Left ventricle myocardium inferior (tissue), 1 donor: ENCODE measurements at regions of chr1 and their contacts with region 1.

Region 1: GRCh38 chr1:246753670-246754535 is 29.7 kb downstream of the SCCPDH start:
- DNase-seq: peak; percentile 44
- H3K4me3 ChIP-seq: no peak overlapping the region
- H3K27ac ChIP-seq: no peak overlapping the region
- H3K4me1 ChIP-seq: peaks cover 6% of the 10 kb centered on the region
- H3K27me3 ChIP-seq: no peaks in the 10 kb centered on the region
- CTCF ChIP-seq: peak; percentile 84

Region 2: DNA sequence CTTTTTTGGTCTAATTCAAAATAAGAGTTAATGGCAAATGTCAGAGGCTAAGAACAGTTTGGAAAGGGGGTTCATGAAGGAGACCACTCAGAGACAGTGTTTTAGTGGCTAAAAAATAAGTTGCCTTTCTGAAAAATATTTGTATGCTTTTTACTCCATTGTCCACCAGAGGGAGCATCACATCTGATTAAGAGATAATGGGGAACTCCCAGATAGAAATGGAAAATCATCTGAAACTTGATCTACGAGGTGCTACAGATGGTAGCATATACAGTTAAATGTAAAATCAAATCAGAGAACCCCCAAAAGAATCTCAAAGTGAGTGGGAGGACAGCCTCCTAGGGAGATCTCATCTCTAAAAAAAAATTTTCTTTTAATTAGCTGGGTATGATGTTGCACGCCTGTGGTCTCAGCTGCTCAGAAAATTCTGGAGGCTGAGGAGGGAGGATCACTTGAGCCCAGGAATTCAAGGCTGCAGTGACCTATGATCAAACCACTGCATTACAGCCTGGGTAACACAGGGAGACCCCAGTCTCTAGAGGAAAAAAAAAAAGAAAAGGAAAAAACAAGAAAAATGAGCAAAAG is 256.5 kb before region 1 on chr1:
- intact Hi-C with region 1: loop called (anchors 10 kb)
- DNase-seq: no peak
- H3K4me3 ChIP-seq: no peak overlapping the region
- H3K27ac ChIP-seq: no peak overlapping the region
- H3K4me1 ChIP-seq: peaks cover 1% of the 10 kb centered on the region
- H3K27me3 ChIP-seq: no peaks in the 10 kb centered on the region
- CTCF ChIP-seq: peak; percentile 73

Region 3: DNA sequence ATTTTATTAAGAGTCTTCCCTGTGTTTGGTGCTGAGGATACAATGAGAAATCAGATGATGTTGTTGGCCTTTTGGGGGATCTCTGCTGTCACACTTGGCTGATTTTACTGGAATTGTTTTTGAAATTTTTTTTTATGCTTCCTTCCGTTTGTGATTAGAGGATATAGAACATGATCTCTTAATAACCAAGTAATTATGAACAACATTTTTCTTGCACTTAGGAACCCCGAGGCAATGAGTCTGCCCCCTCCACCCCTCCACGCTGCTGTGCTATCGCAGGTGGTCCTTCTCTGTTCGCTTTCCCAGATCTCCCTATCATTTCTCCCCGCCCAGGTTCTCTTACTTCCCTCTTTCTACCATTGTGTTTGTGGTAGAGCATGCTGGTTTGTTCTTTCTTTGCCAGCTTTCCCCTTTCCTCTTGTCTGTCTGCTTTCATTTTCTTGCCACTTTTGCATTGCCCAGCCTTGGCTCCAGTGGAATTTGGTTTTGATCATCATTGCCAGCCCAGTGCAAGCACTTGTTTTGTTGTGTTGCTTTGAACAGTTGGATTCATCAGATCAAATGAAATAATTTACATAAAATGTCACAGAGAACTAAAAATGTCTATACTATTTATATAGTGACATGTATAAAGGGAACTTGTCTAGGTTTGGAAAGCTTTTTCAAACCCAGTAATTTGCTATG is 102.7 kb before region 1 on chr1:
- intact Hi-C with region 1: no loop called
- DNase-seq: no peak
- H3K4me3 ChIP-seq: peak overlapping the region; percentile 59
- H3K27ac ChIP-seq: peak overlapping the region; percentile 76
- H3K4me1 ChIP-seq: peaks cover 28% of the 10 kb centered on the region
- H3K27me3 ChIP-seq: no peaks in the 10 kb centered on the region
- CTCF ChIP-seq: no peak